B cell (primary cell): ENCODE measurements at regions of chr10 and their contacts with region 1.

Region 1: GRCh38 chr10:118710486-118710885 is 44.3 kb downstream of the CACUL1 start:
- DNase-seq: no peak
- ATAC-seq: no peak
- H3K4me3 ChIP-seq: no peak overlapping the region
- H3K4me3 Mint-ChIP-seq: no peak overlapping the region
- H3K27ac ChIP-seq: no peak overlapping the region
- H3K27ac Mint-ChIP-seq: no peak overlapping the region
- H3K4me1 ChIP-seq: no peaks in the 10 kb centered on the region
- H3K4me1 Mint-ChIP-seq: no peaks in the 10 kb centered on the region
- H3K27me3 ChIP-seq: no peaks in the 10 kb centered on the region
- H3K27me3 Mint-ChIP-seq: no peaks in the 10 kb centered on the region
- CTCF ChIP-seq: no peak

Region 2: DNA sequence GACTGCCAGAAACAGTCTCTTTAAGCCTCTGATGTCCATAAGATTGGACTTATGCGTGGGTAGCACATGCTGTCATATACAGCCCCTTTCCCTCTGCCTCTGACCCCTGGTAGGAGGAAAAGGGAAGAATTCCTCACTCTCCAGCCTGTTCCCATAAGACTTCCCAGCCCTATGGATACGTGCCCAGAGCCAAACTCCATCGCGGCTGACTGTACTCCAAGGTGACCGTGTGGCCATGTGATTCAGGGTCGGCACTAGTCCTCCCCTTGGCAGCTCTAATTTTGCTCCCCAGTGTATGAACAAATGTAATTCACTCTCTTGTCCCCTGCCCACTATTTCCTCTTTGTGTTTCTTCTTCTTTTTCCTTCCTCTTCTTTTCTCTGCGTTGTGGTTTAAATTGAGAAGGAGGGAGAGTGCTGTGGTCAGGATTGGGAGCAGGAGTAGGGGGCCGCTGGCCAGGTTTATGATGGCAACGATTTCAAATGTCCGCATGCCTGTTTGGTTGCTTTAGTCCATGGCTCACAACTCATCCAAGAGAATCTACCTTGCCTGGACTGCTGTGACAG is 158.9 kb before region 1 on chr10:
- CTCF ChIA-PET with region 1: no interaction called
- POLR2A ChIA-PET with region 1: no interaction called
- intact Hi-C with region 1: no loop called
- DNase-seq: no peak
- ATAC-seq: no peak
- H3K4me3 ChIP-seq: no peak overlapping the region
- H3K4me3 Mint-ChIP-seq: no peak overlapping the region
- H3K27ac ChIP-seq: no peak overlapping the region
- H3K27ac Mint-ChIP-seq: no peak overlapping the region
- H3K4me1 ChIP-seq: no peaks in the 10 kb centered on the region
- H3K4me1 Mint-ChIP-seq: no peaks in the 10 kb centered on the region
- H3K27me3 ChIP-seq: peaks cover 0 to 7% (median 0%) of the 10 kb centered on the region in 4 experiments
- H3K27me3 Mint-ChIP-seq: peaks cover 40% of the 10 kb centered on the region
- CTCF ChIP-seq: no peak

Region 3: GRCh38 chr10:118720685-118721538 is 10.4 kb after region 1 on chr10:
- CTCF ChIA-PET with region 1: interaction called, 12 read pairs
- POLR2A ChIA-PET with region 1: no interaction called
- intact Hi-C with region 1: no loop called
- DNase-seq: peak; percentile 71
- ATAC-seq: peak; percentile 39
- H3K4me3 ChIP-seq: no peak overlapping the region
- H3K4me3 Mint-ChIP-seq: no peak overlapping the region
- H3K27ac ChIP-seq: no peak overlapping the region
- H3K27ac Mint-ChIP-seq: no peak overlapping the region
- H3K4me1 ChIP-seq: no peaks in the 10 kb centered on the region
- H3K4me1 Mint-ChIP-seq: peaks cover 13% of the 10 kb centered on the region
- H3K27me3 ChIP-seq: no peaks in the 10 kb centered on the region
- H3K27me3 Mint-ChIP-seq: no peaks in the 10 kb centered on the region
- CTCF ChIP-seq: peak; percentile 97

Region 4: DNA sequence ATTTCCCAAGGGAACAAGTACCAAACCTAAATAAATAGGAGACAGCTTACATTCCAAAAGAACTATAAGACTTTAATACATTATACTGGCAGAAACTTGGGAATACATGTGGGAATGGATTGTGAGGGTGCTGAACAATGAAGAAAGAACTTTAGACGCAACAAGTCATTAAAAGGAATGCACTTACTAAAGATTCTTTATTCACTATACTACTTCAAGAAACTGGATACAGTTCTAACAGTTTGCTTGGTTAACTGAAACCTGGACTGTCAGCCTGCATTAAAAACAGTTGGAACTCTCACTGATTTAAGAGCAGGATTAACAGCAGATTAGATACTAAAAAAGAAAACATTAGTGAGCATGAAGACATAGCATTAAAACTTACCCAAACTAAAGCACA is 32.3 kb after region 1 on chr10:
- CTCF ChIA-PET with region 1: no interaction called
- POLR2A ChIA-PET with region 1: no interaction called
- intact Hi-C with region 1: no loop called
- DNase-seq: no peak
- ATAC-seq: no peak
- H3K4me3 ChIP-seq: no peak overlapping the region
- H3K4me3 Mint-ChIP-seq: no peak overlapping the region
- H3K27ac ChIP-seq: no peak overlapping the region
- H3K27ac Mint-ChIP-seq: no peak overlapping the region
- H3K4me1 ChIP-seq: peaks cover 0 to 8% of the 10 kb centered on the region in 2 donors
- H3K4me1 Mint-ChIP-seq: peaks cover 52% of the 10 kb centered on the region
- H3K27me3 ChIP-seq: no peaks in the 10 kb centered on the region
- H3K27me3 Mint-ChIP-seq: no peaks in the 10 kb centered on the region
- CTCF ChIP-seq: no peak

Region 5: GRCh38 chr10:118800920-118801319 is 90.4 kb after region 1 on chr10:
- CTCF ChIA-PET with region 1: no interaction called
- POLR2A ChIA-PET with region 1: no interaction called
- intact Hi-C with region 1: no loop called
- DNase-seq: peak; percentile 15
- ATAC-seq: no peak
- H3K4me3 ChIP-seq: no peak overlapping the region
- H3K4me3 Mint-ChIP-seq: no peak overlapping the region
- H3K27ac ChIP-seq: no peak overlapping the region
- H3K27ac Mint-ChIP-seq: no peak overlapping the region
- H3K4me1 ChIP-seq: no peaks in the 10 kb centered on the region
- H3K4me1 Mint-ChIP-seq: no peaks in the 10 kb centered on the region
- H3K27me3 ChIP-seq: no peaks in the 10 kb centered on the region
- H3K27me3 Mint-ChIP-seq: peaks cover 31% of the 10 kb centered on the region
- CTCF ChIP-seq: peak; percentile 38